Dendritic cell treated with granulocyte-macrophage colony-stimulating factor and Interleukin-4, amounts not matched to agents 40 ng/mL and 50 ng/mL, for 4 days (primary cell): ENCODE measurements at regions of chr2 and their contacts with region 1.

Region 1: DNA sequence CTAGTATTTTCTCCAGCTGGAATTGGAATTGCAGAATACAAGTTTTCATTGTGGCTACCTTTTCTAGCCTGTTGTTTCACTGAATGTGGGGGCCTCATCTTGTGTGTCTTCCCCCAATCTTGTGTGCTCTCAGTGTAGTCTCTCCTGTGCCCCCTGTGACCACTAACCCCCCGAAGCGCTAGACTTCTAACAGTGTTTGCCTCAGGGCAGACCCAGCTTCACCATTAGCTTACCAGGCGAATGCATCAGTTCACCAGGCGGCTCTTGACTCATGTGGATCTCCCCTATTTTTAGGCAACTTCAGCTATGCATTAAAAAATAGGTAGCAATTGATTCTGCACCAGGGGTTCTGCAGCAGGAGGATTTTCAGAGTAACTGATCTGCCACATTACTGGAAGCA is 376.2 kb upstream of the MEIS1 start:
- H3K4me3 Mint-ChIP-seq: no peak overlapping the region
- H3K27ac Mint-ChIP-seq: no peak overlapping the region
- H3K4me1 Mint-ChIP-seq: no peaks in the 10 kb centered on the region
- H3K27me3 Mint-ChIP-seq: no peaks in the 10 kb centered on the region

Region 2: GRCh38 chr2:65952951-65953350 is 105.7 kb before region 1 on chr2:
- intact Hi-C with region 1: no loop called
- H3K4me3 Mint-ChIP-seq: no peak overlapping the region
- H3K27ac Mint-ChIP-seq: no peak overlapping the region
- H3K4me1 Mint-ChIP-seq: no peaks in the 10 kb centered on the region
- H3K27me3 Mint-ChIP-seq: no peaks in the 10 kb centered on the region

Region 3: DNA sequence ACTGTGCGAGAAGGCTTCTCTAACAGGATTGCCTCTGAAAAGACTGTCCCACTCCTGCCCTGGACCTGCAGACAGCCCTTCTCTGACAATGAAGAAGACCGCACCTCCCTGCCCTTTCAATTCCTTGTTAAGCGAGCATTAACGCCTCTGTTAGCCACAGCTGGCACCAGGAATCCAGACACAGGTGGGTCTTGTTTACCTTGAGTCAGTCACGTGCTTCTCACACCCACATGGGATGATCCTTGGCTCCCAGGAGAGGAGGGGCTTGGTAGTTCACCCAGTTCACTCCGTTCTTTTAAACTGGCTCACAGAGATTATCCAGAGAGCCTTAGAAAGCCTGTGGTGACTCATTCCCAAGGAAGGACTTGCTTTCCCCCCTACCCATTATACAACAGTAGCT is 34.3 kb before region 1 on chr2:
- intact Hi-C with region 1: no loop called
- H3K4me3 Mint-ChIP-seq: no peak overlapping the region
- H3K27ac Mint-ChIP-seq: no peak overlapping the region
- H3K4me1 Mint-ChIP-seq: no peaks in the 10 kb centered on the region
- H3K27me3 Mint-ChIP-seq: no peaks in the 10 kb centered on the region

Region 4: GRCh38 chr2:66048667-66049066 is 10.0 kb before region 1 on chr2:
- intact Hi-C with region 1: no loop called
- H3K4me3 Mint-ChIP-seq: no peak overlapping the region
- H3K27ac Mint-ChIP-seq: no peak overlapping the region
- H3K4me1 Mint-ChIP-seq: no peaks in the 10 kb centered on the region
- H3K27me3 Mint-ChIP-seq: no peaks in the 10 kb centered on the region

Region 5: GRCh38 chr2:66134138-66134701 is 75.5 kb after region 1 on chr2:
- intact Hi-C with region 1: no loop called
- H3K4me3 Mint-ChIP-seq: no peak overlapping the region
- H3K27ac Mint-ChIP-seq: no peak overlapping the region
- H3K4me1 Mint-ChIP-seq: no peaks in the 10 kb centered on the region
- H3K27me3 Mint-ChIP-seq: no peaks in the 10 kb centered on the region

Region 6: GRCh38 chr2:67277450-67277849 is 1218.8 kb after region 1 on chr2:
- intact Hi-C with region 1: loop called (anchors 5 kb)
- H3K4me3 Mint-ChIP-seq: no peak overlapping the region
- H3K27ac Mint-ChIP-seq: no peak overlapping the region
- H3K4me1 Mint-ChIP-seq: no peaks in the 10 kb centered on the region
- H3K27me3 Mint-ChIP-seq: no peaks in the 10 kb centered on the region